ENCODE measurements at regions of chr9 and their contacts with region 1.

Region 1: DNA sequence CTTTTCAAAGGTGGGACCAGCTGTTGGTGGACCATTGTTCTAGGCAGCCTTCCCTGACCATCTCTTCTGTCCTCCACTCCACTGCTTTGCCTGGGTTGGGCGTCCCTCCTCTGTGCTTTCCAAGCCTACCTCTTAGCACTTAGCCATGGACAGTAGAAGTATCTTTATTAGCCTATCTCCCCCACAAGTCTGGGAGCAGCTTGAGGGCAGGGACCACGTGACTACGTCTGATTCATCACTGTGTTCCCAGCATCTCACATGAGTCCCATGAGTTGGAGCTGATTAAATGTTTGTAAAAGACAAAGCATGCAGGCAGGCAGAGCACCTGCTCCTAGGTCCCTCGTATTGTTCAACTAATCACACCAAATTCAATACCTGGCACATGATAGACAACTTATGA is 20.9 kb downstream of the MORN5 start:
- DNase-seq: no peak
- H3K4me3 ChIP-seq: no peak overlapping the region
- H3K27ac ChIP-seq: no peak overlapping the region
- H3K4me1 ChIP-seq: no peaks in the 10 kb centered on the region; a peak in 1 of 7 replicates
- H3K27me3 ChIP-seq: no peaks in the 10 kb centered on the region
- CTCF ChIP-seq: no peak
- EP300 ChIP-seq: no peak
- POLR2A ChIP-seq: no peak
- RAD21 ChIP-seq: no peak

Region 2: DNA sequence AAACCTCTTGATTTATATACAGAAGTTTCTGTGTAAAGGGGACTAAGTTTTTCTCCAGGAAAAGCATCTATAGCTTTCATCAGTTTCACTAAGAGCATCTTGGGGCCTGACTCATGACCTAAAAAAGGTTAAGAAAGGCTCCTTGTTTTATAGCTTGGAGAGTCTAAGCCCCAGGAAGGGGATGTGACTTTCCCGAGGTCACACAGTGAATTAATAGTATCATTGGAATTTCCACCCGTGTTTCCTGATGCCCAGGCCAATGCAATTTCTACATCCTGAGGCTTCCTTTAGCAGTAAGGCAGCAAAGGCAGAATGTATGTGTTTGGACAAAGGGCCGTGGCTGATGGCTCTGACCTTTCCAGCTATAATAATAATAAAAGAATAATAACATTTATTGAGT is 12.3 kb before region 1 on chr9:
- CTCF ChIA-PET with region 1: interaction called, 13 read pairs
- POLR2A ChIA-PET with region 1: no interaction called
- DNase-seq: no peak
- H3K4me3 ChIP-seq: no peak overlapping the region
- H3K27ac ChIP-seq: no peak overlapping the region
- H3K4me1 ChIP-seq: no peaks in the 10 kb centered on the region
- H3K27me3 ChIP-seq: peaks cover 0 to 3% (median 0%) of the 10 kb centered on the region in 4 experiments; a peak in 2 of 7 replicates
- CTCF ChIP-seq: no peak
- EP300 ChIP-seq: no peak
- POLR2A ChIP-seq: no peak
- RAD21 ChIP-seq: no peak

Region 3: DNA sequence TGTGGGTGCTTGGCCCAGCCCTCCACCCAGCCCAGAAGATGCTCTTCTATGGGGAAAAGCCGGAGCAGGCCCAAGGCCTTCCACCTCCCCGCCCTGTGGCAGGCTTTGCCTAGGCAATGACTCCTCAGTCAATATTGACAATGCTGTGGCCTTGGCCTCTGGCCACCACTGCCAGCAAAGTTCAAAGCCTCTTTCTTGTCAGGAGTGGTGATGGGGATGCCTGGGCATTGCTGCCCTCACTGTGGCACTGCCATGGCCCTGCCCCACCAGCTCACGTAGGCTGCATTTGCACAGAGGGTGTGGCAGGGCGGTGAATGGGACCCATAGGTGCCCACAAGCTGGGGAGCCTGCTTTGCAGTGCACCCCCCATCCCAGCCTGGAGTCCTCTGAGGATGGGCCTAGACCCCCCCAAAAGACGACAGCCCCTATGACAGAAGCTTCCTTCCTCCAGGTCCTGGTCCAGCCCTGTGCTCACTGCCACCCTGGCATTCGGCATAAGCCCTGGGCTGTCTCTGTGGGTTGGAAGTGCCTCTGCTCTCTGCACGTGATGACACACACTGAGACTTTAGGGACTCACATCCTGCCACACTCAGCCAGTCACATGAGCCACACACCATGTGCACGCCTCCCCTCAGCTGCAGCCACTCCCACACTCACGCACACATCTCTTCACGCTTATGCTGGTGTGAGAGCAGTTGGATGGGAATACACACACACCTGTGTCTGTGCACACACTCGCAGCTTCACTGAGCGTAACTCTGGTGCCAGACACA is 10.1 kb after region 1 on chr9:
- CTCF ChIA-PET with region 1: interaction called, 11 read pairs
- POLR2A ChIA-PET with region 1: interaction called, 3 read pairs
- DNase-seq: no peak
- H3K4me3 ChIP-seq: no peak overlapping the region
- H3K27ac ChIP-seq: no peak overlapping the region
- H3K4me1 ChIP-seq: peaks cover 0 to 3% (median 1%) of the 10 kb centered on the region in 4 experiments; a peak in 2 of 7 replicates
- H3K27me3 ChIP-seq: no peaks in the 10 kb centered on the region; a peak in 1 of 7 replicates
- CTCF ChIP-seq: no peak
- EP300 ChIP-seq: no peak
- POLR2A ChIP-seq: no peak
- RAD21 ChIP-seq: no peak

Region 4: DNA sequence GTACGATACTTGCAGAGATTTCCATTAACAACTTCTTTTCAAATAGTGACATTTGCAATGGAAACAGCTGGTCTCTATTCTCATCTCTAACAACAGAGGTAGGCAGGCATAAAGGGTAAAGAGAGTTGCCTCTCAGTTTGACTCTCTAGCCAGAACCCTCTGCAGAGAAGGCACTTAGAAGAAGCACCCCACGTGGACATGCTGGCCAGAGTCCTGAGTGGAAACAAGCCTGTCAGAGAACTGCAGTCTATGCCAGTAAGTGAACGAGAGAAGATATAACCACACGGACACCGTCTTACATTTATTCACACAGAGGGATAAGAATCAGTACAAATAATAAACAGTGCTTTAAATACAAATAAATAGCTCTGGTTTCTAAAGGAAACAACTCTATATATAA is 59.1 kb after region 1 on chr9:
- CTCF ChIA-PET with region 1: no interaction called
- POLR2A ChIA-PET with region 1: no interaction called
- DNase-seq: no peak
- H3K4me3 ChIP-seq: no peak overlapping the region
- H3K27ac ChIP-seq: no peak overlapping the region
- H3K4me1 ChIP-seq: no peaks in the 10 kb centered on the region
- H3K27me3 ChIP-seq: no peaks in the 10 kb centered on the region
- CTCF ChIP-seq: no peak
- EP300 ChIP-seq: no peak
- POLR2A ChIP-seq: no peak
- RAD21 ChIP-seq: no peak

Measured in H1 (cell line).